GM13976 (cell line): ENCODE measurements at regions of chr2 and their contacts with region 1.

Region 1: DNA sequence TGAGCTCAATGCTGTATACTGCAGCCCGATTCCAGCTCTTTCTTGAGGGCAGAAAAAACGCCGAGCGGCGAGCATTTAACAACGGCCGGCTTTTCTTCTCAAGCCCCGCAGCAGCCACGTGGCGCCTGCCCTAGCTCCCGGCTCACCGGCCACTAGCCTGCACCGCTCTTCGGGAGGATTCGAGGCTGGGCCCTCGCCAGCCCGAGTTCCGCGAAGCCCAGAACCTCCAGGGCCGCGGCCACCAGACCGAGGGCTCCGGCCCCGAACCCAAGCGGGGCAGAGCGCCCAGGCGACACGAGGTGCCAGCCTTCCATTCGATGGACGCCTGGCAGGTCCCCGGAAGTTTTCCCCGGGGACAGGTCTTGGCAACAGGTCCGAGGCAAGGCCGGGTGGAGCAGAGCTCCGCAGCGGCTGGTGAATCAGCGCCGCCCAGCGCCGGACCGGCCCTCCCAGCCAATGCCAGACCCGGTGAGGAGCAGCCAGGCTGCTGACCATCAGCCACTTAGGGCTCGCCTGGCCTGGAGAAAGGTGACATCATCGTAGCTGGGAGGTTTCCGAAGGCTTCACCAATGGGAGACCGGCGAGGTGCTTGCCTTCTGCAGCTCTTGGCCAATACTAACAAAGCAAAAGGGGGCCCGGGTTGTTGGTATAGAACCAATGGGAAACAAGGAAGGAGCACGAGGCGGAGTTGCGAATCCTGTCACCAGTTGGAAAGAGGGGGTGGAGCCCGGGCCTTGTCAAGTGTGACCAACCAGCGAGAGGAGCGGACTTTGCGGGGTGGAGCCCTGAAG is 544 bp upstream of the MXD1 start:
- DNase-seq: no peak
- CTCF ChIP-seq: peak; percentile 52

Region 2: DNA sequence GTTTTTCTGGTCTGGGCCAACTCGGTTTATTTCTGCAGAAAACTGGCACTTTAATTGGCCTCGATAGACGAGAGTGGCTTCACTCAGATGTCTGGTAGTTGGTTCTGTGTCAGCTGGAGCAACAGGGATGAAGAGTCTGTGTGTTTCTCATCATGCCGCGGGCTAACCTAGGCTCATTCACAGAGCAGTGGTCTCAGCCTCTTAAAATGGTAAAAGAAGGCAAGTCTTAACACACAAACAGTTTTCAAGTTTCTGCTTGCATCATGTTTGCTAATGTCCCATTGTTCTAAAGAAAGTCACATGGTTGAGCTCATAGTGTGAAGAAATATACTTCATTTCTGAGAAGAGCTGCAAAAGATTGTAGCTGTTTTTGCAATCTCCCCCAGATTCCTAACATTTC is 209.9 kb before region 1 on chr2:
- in situ Hi-C with region 1: no loop called
- DNase-seq: no peak
- CTCF ChIP-seq: no peak

Region 3: GRCh38 chr2:70069049-70069448 is 154.7 kb after region 1 on chr2:
- in situ Hi-C with region 1: loop called (anchors 10 kb)
- DNase-seq: peak; percentile 63
- CTCF ChIP-seq: no peak

Region 4: GRCh38 chr2:70142590-70143313 is 228.4 kb after region 1 on chr2:
- in situ Hi-C with region 1: loop called (anchors 10 kb)
- DNase-seq: peak; percentile 97
- CTCF ChIP-seq: peak; percentile 99

Region 5: GRCh38 chr2:70283500-70284191 is 369.3 kb after region 1 on chr2:
- in situ Hi-C with region 1: loop called (anchors 25 kb)
- DNase-seq: no peak
- CTCF ChIP-seq: no peak